ENCODE measurements at regions of chr1 and their contacts with region 1.

Region 1: DNA sequence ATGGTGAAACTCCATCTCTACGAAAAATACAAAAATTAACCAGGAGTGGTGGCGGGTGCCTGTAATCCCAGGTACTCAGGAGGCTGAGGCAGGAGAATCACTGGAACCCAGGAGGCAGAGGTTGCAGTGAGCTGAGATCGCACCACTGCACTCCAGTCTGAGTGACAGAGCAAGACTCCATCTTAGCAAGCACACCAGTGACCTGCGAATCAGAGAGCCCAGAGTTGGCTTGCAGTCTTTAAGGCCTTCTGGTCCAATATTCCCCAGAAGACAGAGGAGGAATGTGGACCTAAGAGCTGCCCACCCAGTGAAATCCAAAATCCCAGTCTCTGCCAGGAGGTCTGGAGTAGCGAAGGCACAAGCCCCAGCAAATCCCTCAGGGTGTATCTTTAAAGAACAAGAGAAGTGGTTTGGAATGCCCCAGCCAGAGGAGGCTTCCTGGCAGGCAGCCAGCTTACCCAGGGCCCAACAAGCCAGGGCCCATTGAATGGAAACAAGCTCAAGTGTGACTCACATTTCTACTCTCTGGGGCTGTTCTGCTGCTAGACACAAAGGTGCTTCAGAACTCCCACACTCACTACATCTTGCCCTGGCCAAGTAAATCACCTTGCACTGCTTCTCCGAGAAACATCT is 23.9 kb downstream of the GPR161 start:
- DNase-seq: no peak
- ATAC-seq: no peak
- H3K4me3 ChIP-seq: no peak overlapping the region
- H3K27ac ChIP-seq: no peak overlapping the region
- H3K4me1 ChIP-seq: no peaks in the 10 kb centered on the region
- H3K27me3 ChIP-seq: no peaks in the 10 kb centered on the region
- CTCF ChIP-seq: no peak
- POLR2A ChIP-seq: no peak

Region 2: DNA sequence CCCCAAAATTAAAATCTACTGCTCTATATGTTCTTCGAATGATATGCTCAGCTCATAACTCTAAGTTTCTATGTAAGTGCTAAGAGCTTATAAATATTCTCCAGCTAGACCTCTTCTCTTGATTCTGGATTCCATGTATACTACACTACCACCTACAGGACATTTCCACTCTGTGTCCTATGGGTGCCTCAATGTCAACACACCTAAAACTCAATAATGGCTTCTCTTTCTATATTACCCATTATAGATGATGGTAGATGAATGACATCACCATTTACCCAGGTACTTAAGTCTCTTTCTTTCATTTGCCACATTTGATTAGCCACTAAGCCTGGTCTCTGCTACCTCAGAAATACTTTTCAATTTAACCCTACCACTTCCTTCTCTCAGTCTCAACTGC is 209.2 kb after region 1 on chr1:
- intact Hi-C with region 1: loop called in 1 of 2 experiments (anchors 10 kb)
- DNase-seq: no peak
- ATAC-seq: peak; percentile 76 to 83 (median 78)
- H3K4me3 ChIP-seq: no peak overlapping the region
- H3K27ac ChIP-seq: no peak overlapping the region
- H3K4me1 ChIP-seq: peaks cover 0 to 11% (median 2%) of the 10 kb centered on the region in 4 donors
- H3K27me3 ChIP-seq: no peaks in the 10 kb centered on the region
- CTCF ChIP-seq: peak; percentile 42 to 55 (median 45)
- POLR2A ChIP-seq: no peak

Measured in right lobe of liver (tissue), 6 donors.